Mucosa of descending colon (tissue), 3 donors: ENCODE measurements at regions of chr1 and their contacts with region 1.

Region 1: GRCh38 chr1:172826096-172826743 is 167.3 kb downstream of the FASLG start:
- DNase-seq: peak in 1 of 3 donors; percentile 39
- ATAC-seq: peak; percentile 91
- H3K4me3 ChIP-seq: no peak overlapping the region
- H3K4me1 ChIP-seq: peaks cover 11% of the 10 kb centered on the region
- CTCF ChIP-seq: no peak

Region 2: GRCh38 chr1:172745014-172745413 is 81.2 kb before region 1 on chr1:
- intact Hi-C with region 1: loop called in 1 of 2 experiments (anchors 1 kb)
- DNase-seq: peak in 1 of 3 donors; percentile 79
- ATAC-seq: peak; percentile 82
- H3K4me3 ChIP-seq: no peak overlapping the region
- H3K4me1 ChIP-seq: peaks cover 17% of the 10 kb centered on the region
- CTCF ChIP-seq: no peak

Region 3: GRCh38 chr1:173195596-173196088 is 369.4 kb after region 1 on chr1:
- intact Hi-C with region 1: loop called in 1 of 2 experiments (anchors 5 kb)
- DNase-seq: no peak
- ATAC-seq: no peak
- H3K4me3 ChIP-seq: no peak overlapping the region
- H3K4me1 ChIP-seq: peaks cover under 1% of the 10 kb centered on the region
- CTCF ChIP-seq: no peak

Region 4: GRCh38 chr1:173202430-173203145 is 376.4 kb after region 1 on chr1:
- intact Hi-C with region 1: loop called (anchors 2 to 5 kb)
- DNase-seq: peak in 1 of 3 donors; percentile 84
- ATAC-seq: peak; percentile 58
- H3K4me3 ChIP-seq: no peak overlapping the region
- H3K4me1 ChIP-seq: peaks cover 7% of the 10 kb centered on the region
- CTCF ChIP-seq: no peak

Region 5: DNA sequence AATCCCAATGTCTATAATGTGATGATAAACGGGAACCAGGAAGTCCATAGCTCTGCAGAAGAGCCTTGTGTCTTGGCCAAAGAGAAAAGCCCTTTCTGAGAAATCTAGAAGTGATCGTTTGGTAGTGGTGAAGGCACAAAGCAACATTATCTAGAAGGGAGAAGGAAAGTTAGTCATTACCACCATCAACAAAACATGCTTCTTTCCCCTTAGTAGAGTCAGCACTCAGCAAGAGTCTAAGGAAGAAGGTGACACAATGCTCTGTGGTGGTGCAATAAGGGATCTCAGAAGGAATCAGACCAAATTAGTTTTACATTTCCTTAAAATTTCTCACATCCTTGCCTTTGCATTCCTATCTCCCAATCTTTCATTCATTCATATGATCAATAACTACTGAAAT is 516.5 kb after region 1 on chr1:
- intact Hi-C with region 1: no loop called
- DNase-seq: no peak
- ATAC-seq: no peak
- H3K4me3 ChIP-seq: no peak overlapping the region
- H3K4me1 ChIP-seq: peaks cover 8% of the 10 kb centered on the region
- CTCF ChIP-seq: no peak